Heart left ventricle (tissue), 16 donors: ENCODE measurements at regions of chr10 and their contacts with region 1.

Region 1: GRCh38 chr10:100346765-100347567 is at the start of gene SCD:
- DNase-seq: peak; percentile 77 to 86 (median 79)
- ATAC-seq: peak; percentile 51 to 88 (median 86)
- H3K4me3 ChIP-seq: peak within 1 kb of the TSS; percentile 44 to 73 (median 60)
- H3K27ac ChIP-seq: peak within 1 kb of the TSS in 3 of 12 donors; percentile 42 to 50 (median 45)
- H3K4me1 ChIP-seq: peaks cover 0 to 21% (median 11%) of the 10 kb centered on the region in 12 donors
- H3K27me3 ChIP-seq: peaks cover 0 to 37% (median 0%) of the 10 kb centered on the region in 9 donors
- CTCF ChIP-seq: no peak
- POLR2A ChIP-seq: peak in 1 of 2 donors; percentile 54
- total RNA-seq, gene SCD: 2.3 to 216 (median 4.9) TPM

Region 2: GRCh38 chr10:100229819-100230422 is 117.0 kb before region 1 on chr10:
- intact Hi-C with region 1: no loop called
- DNase-seq: no peak
- ATAC-seq: no peak
- H3K4me3 ChIP-seq: peak overlapping the region; percentile 64 to 98 (median 87)
- H3K27ac ChIP-seq: peak overlapping the region; percentile 10 to 84 (median 79)
- H3K4me1 ChIP-seq: peaks cover 0 to 22% (median 9%) of the 10 kb centered on the region in 12 donors
- H3K27me3 ChIP-seq: no peaks in the 10 kb centered on the region
- CTCF ChIP-seq: no peak
- POLR2A ChIP-seq: peak in 1 of 2 donors; percentile 30

Region 3: DNA sequence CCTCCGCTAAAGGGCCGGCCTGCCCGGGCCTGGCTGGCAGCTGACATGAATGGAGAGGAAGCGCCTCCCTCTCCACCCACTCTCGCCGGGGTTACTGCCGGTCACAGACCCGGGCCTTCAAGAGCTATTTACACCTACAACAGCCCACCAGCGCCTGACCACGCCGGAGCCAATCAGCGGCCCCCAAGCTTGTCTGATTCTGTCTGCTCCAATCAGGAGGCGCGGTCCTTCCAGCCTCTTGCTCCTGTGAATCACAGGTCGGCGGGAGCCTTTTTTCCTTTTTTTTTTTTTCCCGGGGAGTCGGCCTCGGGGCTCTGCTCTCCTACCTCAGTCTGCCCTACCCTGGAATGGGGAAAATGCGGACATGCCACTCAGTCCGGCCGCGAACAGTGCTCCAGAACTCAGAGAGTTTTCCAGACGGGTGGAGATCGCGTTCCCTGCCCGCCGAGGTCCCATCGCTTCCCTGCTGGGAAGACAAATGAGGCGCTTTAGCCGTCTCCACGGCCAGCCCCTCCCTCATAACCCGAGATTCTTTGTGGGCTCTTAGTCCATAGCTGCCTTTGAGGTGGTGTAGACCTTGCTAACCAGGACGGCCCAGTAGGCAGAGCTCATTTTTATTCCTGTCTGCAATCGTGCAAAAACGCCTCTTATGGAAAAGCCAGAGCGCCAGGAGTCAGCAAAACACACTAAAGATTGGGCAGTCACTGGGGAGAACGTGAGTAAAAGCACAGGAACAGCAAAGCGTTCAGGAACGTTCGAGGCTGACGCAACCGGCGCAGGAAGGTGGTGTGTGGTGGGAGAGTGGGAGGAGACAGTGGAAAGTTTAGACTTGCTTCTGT is 26.6 kb after region 1 on chr10:
- intact Hi-C with region 1: loop called in 1 of 10 experiments (anchors 2 kb)
- DNase-seq: peak; percentile 95 to 98 (median 96)
- ATAC-seq: peak; percentile 98
- H3K4me3 ChIP-seq: peak overlapping the region; percentile 19 to 81 (median 68)
- H3K27ac ChIP-seq: peak overlapping the region; percentile 66 to 95 (median 92)
- H3K4me1 ChIP-seq: peaks cover 0 to 47% (median 28%) of the 10 kb centered on the region in 12 donors
- H3K27me3 ChIP-seq: no peaks in the 10 kb centered on the region
- CTCF ChIP-seq: no peak
- POLR2A ChIP-seq: no peak

Region 4: DNA sequence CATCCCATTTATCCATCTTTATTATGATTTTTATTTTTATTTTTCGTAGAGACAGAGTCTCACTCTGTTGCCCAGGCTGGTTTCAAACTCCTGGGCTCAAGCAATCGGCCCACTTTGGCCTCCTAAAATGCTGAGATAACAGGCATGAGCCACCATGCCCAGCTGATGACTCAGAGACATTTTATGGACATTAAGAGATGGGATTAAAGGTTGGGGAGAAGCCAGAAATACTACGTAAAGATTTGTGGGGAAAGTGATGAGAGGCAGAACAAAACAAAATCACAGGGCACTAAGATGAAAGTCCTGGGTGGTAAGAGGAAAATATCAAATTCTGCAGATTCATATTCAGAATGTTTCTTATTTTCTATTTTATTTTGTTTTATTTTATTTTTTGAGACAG is 123.4 kb after region 1 on chr10:
- intact Hi-C with region 1: no loop called
- DNase-seq: no peak
- ATAC-seq: no peak
- H3K4me3 ChIP-seq: no peak overlapping the region
- H3K27ac ChIP-seq: no peak overlapping the region
- H3K4me1 ChIP-seq: no peaks in the 10 kb centered on the region
- H3K27me3 ChIP-seq: peaks cover 0 to 35% (median 0%) of the 10 kb centered on the region in 9 donors
- CTCF ChIP-seq: no peak
- POLR2A ChIP-seq: no peak